ENCODE measurements at regions of chr19 and their contacts with region 1.

Region 1: GRCh38 chr19:43743022-43743421 is 11.7 kb downstream of the SMG9 start:
- DNase-seq: no peak
- CTCF ChIP-seq: no peak

Region 2: DNA sequence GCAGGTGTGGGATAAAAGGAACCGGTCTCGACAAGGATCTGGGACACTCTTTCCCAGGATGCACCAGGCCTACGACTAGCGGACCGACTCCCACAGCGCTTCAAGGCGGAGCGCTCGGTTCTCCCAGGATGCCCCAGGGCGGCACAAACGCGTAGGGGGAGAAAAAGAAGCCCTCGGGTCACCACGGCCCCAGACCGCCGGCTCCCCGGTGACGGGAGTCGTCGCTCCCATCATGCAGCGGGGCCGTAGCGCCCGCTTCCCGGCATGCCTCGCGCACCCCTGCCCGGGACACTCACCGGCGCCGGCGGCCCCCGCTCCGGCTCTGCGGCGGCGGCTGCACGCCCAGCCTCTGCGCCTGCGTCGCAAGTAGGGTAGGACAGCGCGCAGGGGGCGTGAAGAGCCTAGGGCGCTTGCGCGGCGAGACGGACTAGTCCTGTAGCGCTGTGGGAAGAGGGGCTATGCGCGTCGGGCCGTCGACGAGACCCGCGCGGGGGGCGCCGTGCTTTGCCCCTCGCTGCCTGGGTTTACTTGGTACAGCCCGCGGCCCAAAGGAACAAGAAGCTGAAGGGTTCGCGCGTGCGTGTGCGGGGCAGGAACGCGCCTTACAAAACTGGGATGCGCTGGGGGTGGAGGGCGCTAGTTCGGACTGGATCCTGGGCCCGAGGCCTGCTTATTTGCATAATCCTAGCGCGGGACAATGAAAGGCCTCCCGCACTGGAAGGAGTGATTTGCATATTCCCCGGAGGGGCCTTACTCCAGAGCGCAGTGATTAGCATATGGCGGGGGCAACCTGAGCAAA is 123.6 kb before region 1 on chr19 and contains the start of gene ZNF428:
- in situ Hi-C with region 1: no loop called
- DNase-seq: peak; percentile 95
- CTCF ChIP-seq: no peak

Region 3: DNA sequence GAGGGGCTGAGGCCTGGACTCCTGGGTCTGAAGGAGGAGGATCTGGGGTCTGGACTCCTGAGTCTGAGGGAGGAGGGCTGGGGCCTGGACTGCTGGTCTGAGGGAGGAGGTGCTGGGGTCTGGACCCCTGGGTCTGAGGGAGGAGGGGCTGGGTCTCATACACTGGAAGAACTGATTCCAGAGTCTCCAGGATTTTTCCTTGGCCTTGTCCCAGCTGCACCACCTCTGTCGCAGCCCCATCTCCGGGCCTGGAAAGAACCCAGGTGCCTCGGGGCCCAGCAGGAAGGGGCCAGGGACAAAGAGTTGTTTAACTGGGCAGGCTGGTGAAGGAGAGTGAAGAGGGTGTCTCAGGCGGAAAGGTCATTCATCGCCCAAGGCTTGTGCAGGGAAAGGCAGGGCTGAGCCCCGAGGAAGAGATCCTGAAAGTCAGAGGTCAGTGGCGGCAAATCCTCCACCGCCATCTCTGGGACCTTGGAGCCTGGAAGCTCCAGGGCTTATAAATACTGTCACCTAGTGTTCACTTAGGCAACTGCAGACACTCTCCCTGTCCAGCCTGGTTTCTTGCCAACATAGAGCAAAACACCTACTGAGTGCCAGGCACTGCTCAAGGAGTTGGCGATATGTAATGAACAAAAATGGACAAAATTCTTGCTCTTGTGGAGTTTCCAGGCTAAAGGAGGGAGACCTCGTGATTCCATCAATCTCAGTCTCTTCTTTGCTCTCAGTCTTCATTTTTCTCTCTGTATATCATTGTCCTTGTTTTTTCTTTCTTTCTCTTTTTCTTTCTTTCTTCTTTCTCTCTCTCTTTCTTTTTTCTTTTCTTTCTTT is 42.2 kb after region 1 on chr19:
- in situ Hi-C with region 1: loop called (anchors 5 kb)
- DNase-seq: peak; percentile 74
- CTCF ChIP-seq: peak; percentile 94

Region 4: DNA sequence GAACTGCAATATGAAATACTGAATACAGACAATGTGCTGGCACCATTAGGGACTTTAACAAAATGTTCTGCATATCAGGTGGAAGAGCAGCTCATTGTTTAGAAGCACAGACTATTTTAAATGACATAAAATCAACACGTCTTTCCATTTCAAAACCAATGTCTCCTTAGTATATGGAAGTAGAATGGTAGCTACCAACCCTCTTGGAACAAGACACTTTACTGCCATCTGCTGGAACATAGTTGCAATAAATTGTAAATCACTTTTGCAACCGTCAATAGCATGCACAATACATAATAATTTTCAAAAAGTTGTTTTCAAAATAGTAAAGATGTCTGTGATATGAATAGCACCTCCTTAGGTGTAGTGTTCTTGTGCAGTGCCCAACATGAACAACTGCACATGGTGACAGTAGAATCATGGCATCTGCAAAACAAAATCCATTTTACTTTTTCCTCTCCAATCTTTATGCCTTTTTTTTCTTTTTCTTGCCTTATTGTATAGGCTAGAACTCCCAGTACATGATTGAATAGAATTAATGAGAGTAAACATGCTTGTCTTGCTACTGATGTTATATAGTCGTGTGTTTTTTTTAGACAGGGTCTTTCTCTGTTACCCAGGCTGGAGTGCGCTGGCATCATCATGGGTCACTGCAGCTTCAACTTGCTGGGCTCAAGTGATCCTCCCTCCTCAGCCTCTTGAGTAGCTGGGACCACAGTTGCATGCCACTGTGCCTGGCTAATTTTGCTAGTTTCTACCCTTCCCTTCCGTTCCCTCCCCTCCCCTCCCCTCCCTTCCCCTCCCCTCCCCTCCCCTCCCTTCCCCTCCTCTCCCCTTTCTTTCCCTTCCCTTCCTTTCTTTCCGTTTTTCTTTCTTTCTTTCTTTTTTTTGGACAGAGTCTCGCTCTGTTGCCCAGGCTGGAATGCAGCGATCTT is 67.0 kb after region 1 on chr19:
- in situ Hi-C with region 1: loop called (anchors 10 kb)
- DNase-seq: peak; percentile 47
- CTCF ChIP-seq: peak; percentile 62